PC-3 (cell line): ENCODE measurements at regions of chr14 and their contacts with region 1.

Region 1: GRCh38 chr14:32469388-32470160 is 140.5 kb downstream of the AKAP6 start:
- DNase-seq: peak; percentile 67
- ATAC-seq: peak; percentile 18
- H3K4me3 ChIP-seq: no peak overlapping the region
- H3K27ac ChIP-seq: peak overlapping the region; percentile 23
- H3K4me1 ChIP-seq: peaks cover 57% of the 10 kb centered on the region
- H3K27me3 ChIP-seq: no peaks in the 10 kb centered on the region
- CTCF ChIP-seq: peak; percentile 79

Region 2: GRCh38 chr14:31456841-31457664 is 1012.5 kb before region 1 on chr14 and contains the start of gene DTD2:
- CTCF ChIA-PET with region 1: no interaction called
- POLR2A ChIA-PET with region 1: no interaction called
- intact Hi-C with region 1: loop called (anchors 5 kb)
- DNase-seq: peak; percentile 99
- ATAC-seq: peak; percentile 99
- H3K4me3 ChIP-seq: peak within 1 kb of the TSS; percentile 93
- H3K27ac ChIP-seq: peak within 1 kb of the TSS; percentile 74
- H3K4me1 ChIP-seq: peaks cover 20% of the 10 kb centered on the region
- H3K27me3 ChIP-seq: no peaks in the 10 kb centered on the region
- CTCF ChIP-seq: no peak; the same call in 1 of the 2 replicates
- total RNA-seq, gene DTD2: 35.9 and 36.8 TPM in 2 replicates

Region 3: GRCh38 chr14:31880935-31881334 is 588.6 kb before region 1 on chr14:
- CTCF ChIA-PET with region 1: no interaction called
- POLR2A ChIA-PET with region 1: no interaction called
- intact Hi-C with region 1: no loop called
- DNase-seq: peak; percentile 84
- ATAC-seq: peak; percentile 88
- H3K4me3 ChIP-seq: no peak overlapping the region
- H3K27ac ChIP-seq: peak overlapping the region; percentile 16; the same call in 1 of the 2 replicates
- H3K4me1 ChIP-seq: peaks cover 33% of the 10 kb centered on the region
- H3K27me3 ChIP-seq: no peaks in the 10 kb centered on the region
- CTCF ChIP-seq: no peak

Region 4: GRCh38 chr14:31937721-31938346 is 531.7 kb before region 1 on chr14:
- CTCF ChIA-PET with region 1: interaction called, 3 read pairs
- POLR2A ChIA-PET with region 1: no interaction called
- intact Hi-C with region 1: loop called (anchors 1 kb)
- DNase-seq: peak; percentile 94
- ATAC-seq: peak; percentile 92
- H3K4me3 ChIP-seq: no peak overlapping the region
- H3K27ac ChIP-seq: peak overlapping the region; percentile 75
- H3K4me1 ChIP-seq: peaks cover 40% of the 10 kb centered on the region
- H3K27me3 ChIP-seq: no peaks in the 10 kb centered on the region
- CTCF ChIP-seq: no peak

Region 5: DNA sequence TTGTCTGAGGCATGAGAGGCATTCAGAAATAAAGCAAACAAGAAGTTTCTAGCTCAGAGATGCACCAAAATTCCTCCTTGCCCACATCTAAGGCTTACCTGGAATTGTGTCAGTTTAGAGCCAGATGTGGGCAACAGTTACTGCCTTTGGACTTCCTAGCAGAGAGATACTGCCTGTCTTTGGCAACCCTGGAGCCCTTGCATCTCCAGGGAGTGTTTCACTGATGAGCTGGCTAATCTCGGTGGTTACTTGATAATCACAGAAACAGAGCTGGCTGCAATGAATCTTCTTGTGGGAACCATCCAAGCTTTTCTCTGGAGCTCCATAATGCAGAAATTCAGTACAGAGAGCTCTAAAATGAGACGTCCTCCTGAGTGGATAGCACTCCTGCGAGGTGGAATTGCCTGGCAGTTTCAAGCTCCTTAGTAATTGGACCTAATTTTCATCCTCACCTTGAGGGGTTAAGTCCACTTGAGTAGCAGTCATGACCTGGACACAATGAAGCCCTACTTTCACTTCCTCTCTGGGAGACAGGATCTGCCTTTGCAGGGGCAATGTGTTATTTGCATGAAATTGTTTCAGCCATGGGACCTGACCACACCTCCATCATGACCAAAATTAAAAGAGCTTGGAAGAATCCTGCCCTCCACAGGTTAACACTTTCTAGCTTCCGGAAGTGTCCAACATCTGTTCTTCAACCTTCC is 501.3 kb before region 1 on chr14:
- CTCF ChIA-PET with region 1: no interaction called
- POLR2A ChIA-PET with region 1: no interaction called
- intact Hi-C with region 1: no loop called
- DNase-seq: no peak
- ATAC-seq: no peak
- H3K4me3 ChIP-seq: no peak overlapping the region
- H3K27ac ChIP-seq: no peak overlapping the region
- H3K4me1 ChIP-seq: no peaks in the 10 kb centered on the region
- H3K27me3 ChIP-seq: no peaks in the 10 kb centered on the region
- CTCF ChIP-seq: no peak

Region 6: GRCh38 chr14:32202998-32203882 is 266.3 kb before region 1 on chr14 and contains the start of gene RNU6-8:
- CTCF ChIA-PET with region 1: no interaction called
- POLR2A ChIA-PET with region 1: no interaction called
- intact Hi-C with region 1: loop called (anchors 2 kb)
- DNase-seq: peak; percentile 92
- ATAC-seq: peak; percentile 68
- H3K4me3 ChIP-seq: peak within 1 kb of the TSS; percentile 87
- H3K27ac ChIP-seq: peak within 1 kb of the TSS; percentile 65
- H3K4me1 ChIP-seq: peaks cover 21% of the 10 kb centered on the region; the same call in 1 of the 2 replicates
- H3K27me3 ChIP-seq: no peaks in the 10 kb centered on the region
- CTCF ChIP-seq: no peak
- total RNA-seq, gene RNU6-8: not detected in 2 replicates

Region 7: GRCh38 chr14:32366256-32366879 is 103.2 kb before region 1 on chr14:
- CTCF ChIA-PET with region 1: no interaction called
- POLR2A ChIA-PET with region 1: no interaction called
- intact Hi-C with region 1: no loop called
- DNase-seq: peak; percentile 4
- ATAC-seq: no peak
- H3K4me3 ChIP-seq: no peak overlapping the region
- H3K27ac ChIP-seq: no peak overlapping the region
- H3K4me1 ChIP-seq: peaks cover 32% of the 10 kb centered on the region
- H3K27me3 ChIP-seq: no peaks in the 10 kb centered on the region
- CTCF ChIP-seq: 0 out of 2 replicates have a peak, but pooled peaks have one; percentile 28

Region 8: GRCh38 chr14:32397861-32398640 is 71.5 kb before region 1 on chr14:
- CTCF ChIA-PET with region 1: no interaction called
- POLR2A ChIA-PET with region 1: no interaction called
- intact Hi-C with region 1: loop called (anchors 1 kb)
- DNase-seq: peak; percentile 94
- ATAC-seq: peak; percentile 93
- H3K4me3 ChIP-seq: no peak overlapping the region
- H3K27ac ChIP-seq: peak overlapping the region; percentile 36
- H3K4me1 ChIP-seq: peaks cover 37% of the 10 kb centered on the region
- H3K27me3 ChIP-seq: no peaks in the 10 kb centered on the region
- CTCF ChIP-seq: no peak

Region 9: GRCh38 chr14:32509632-32510187 is 40.1 kb after region 1 on chr14:
- CTCF ChIA-PET with region 1: interaction called, 29 read pairs
- POLR2A ChIA-PET with region 1: interaction called, 4 read pairs
- intact Hi-C with region 1: loop called (anchors 1 kb)
- DNase-seq: peak; percentile 80
- ATAC-seq: peak; percentile 69
- H3K4me3 ChIP-seq: peak overlapping the region; percentile 43
- H3K27ac ChIP-seq: peak overlapping the region; percentile 40
- H3K4me1 ChIP-seq: peaks cover 52% of the 10 kb centered on the region
- H3K27me3 ChIP-seq: no peaks in the 10 kb centered on the region
- CTCF ChIP-seq: no peak

Region 10: DNA sequence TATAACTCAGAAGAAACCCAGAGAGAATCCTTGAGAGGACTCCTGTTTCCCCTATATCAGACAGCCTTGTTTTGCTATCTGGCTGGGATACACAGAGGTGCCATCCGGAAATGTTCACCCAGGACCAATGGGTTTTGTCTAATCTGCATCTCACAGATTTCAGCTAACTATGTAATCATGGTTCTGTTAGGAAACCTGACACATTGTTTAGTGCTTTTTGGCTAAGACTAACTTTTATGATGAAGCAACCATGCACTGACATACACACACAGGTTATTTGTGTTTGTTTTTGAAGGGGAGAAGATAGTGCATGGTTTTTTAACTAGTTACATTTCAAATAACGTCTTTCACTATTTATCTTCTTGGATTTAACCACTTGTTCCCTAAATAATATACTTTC is 104.7 kb after region 1 on chr14:
- CTCF ChIA-PET with region 1: no interaction called
- POLR2A ChIA-PET with region 1: no interaction called
- intact Hi-C with region 1: no loop called
- DNase-seq: no peak
- ATAC-seq: no peak
- H3K4me3 ChIP-seq: no peak overlapping the region
- H3K27ac ChIP-seq: no peak overlapping the region
- H3K4me1 ChIP-seq: no peaks in the 10 kb centered on the region
- H3K27me3 ChIP-seq: no peaks in the 10 kb centered on the region
- CTCF ChIP-seq: no peak